ENCODE measurements at regions of chr5 and their contacts with region 1.

Region 1: DNA sequence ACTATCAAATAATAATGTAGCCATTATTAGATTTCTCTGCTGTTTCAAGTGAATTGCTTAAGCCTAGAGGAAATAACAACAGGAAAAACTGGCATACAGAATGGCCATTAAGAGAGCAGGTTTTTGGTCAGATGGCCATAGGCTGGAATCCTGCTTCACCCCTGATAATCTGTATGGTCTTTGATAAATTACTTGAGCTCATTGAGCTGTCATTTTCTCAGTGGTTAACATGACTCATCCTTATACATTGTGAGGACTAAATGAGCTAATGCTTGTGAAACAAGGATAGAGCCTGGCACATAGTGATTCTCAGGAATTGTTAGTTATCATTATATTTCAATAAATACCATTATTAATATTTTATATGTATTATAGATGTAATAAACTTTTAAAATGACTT is 516.5 kb downstream of the KIF4B start:
- DNase-seq: no peak
- H3K4me3 ChIP-seq: no peak overlapping the region
- H3K27ac ChIP-seq: no peak overlapping the region
- H3K4me1 ChIP-seq: no peaks in the 10 kb centered on the region
- H3K27me3 ChIP-seq: no peaks in the 10 kb centered on the region
- CTCF ChIP-seq: no peak
- POLR2A ChIP-seq: no peak

Region 2: DNA sequence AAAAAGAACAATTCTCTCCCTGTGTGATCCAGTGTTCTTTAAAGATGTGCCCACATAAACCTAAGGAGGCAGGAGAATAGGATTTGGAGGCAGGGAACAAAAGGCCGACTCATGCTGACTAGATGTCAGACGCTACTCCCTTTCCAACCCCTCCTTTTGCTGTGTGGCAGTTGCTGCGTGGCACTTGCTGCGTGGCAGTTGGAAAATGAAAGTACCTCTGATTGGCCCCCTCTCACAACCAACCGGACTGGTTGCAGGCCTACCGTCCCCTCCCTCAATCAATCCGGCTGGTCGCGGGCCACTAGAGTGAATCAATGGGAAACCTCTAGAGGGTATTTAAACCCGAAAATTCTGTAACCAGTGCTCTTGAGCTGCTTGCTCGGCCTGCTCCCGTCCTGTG is 34.5 kb after region 1 on chr5:
- intact Hi-C with region 1: loop called (anchors 2 kb)
- DNase-seq: no peak
- H3K4me3 ChIP-seq: no peak overlapping the region
- H3K27ac ChIP-seq: no peak overlapping the region
- H3K4me1 ChIP-seq: no peaks in the 10 kb centered on the region
- H3K27me3 ChIP-seq: no peaks in the 10 kb centered on the region
- CTCF ChIP-seq: no peak
- POLR2A ChIP-seq: no peak

Region 3: DNA sequence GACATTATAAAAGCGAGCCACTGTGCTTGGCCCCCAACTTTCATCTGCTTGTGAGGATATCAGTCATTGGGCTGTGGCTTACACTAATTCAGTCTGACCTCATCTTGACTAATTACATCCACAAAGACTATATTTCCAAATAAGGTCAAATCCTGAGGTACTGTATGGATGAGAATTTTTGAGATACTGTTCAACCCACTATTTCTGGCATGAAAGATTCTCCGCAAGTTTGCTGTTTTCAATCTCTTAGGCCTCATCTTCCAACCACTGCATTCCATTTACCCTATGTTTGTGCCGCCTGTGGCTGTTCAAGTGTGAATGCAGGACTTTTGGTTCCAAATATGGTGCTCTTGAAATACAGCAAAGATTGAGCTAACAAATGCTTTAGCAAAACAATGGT is 396.0 kb after region 1 on chr5:
- intact Hi-C with region 1: no loop called
- DNase-seq: no peak
- H3K4me3 ChIP-seq: no peak overlapping the region
- H3K27ac ChIP-seq: no peak overlapping the region
- H3K4me1 ChIP-seq: no peaks in the 10 kb centered on the region
- H3K27me3 ChIP-seq: no peaks in the 10 kb centered on the region
- CTCF ChIP-seq: no peak
- POLR2A ChIP-seq: no peak